IMR-90 (cell line): ENCODE measurements at regions of chr10 and their contacts with region 1.

Region 1: DNA sequence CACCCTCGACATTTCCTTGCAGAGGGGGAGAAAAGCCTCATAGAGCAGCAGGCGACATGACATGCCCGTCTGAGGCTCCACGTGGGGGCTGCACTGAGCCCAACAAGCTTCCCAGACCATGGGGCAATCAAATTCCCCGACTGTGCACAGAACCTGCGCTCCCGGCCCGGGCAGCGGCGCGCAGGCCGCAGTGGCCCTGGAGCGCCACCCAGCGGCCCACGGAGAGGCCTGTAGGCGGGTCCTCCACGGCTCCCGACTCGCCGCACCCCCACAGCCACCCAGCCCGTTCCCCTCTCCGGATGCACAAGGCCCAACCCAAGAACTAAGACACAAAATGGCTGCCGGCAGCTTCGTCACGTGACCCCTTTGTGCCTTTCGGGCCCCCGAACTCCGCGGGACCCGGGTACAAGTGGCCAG is 816 bp downstream of the EPC1 start:
- DNase-seq: peak; percentile 94
- ATAC-seq: peak; percentile 94
- H3K4me3 ChIP-seq: peak overlapping the region; percentile 90
- H3K27ac ChIP-seq: peak overlapping the region; percentile 99
- H3K4me1 ChIP-seq: no peaks in the 10 kb centered on the region; the same call in 1 of the 2 replicates
- H3K27me3 ChIP-seq: no peaks in the 10 kb centered on the region
- CTCF ChIP-seq: peak; percentile 99
- POLR2A ChIP-seq: no peak
- RAD21 ChIP-seq: peak; percentile 92

Region 2: GRCh38 chr10:31847515-31847914 is 498.6 kb before region 1 on chr10:
- CTCF ChIA-PET with region 1: no interaction called
- POLR2A ChIA-PET with region 1: no interaction called
- dilution Hi-C with region 1: no loop called
- in situ Hi-C with region 1: no loop called
- intact Hi-C with region 1: no loop called
- DNase-seq: no peak
- ATAC-seq: no peak
- H3K4me3 ChIP-seq: no peak overlapping the region
- H3K27ac ChIP-seq: no peak overlapping the region
- H3K4me1 ChIP-seq: no peaks in the 10 kb centered on the region
- H3K27me3 ChIP-seq: no peaks in the 10 kb centered on the region
- CTCF ChIP-seq: no peak
- POLR2A ChIP-seq: no peak
- RAD21 ChIP-seq: no peak

Region 3: DNA sequence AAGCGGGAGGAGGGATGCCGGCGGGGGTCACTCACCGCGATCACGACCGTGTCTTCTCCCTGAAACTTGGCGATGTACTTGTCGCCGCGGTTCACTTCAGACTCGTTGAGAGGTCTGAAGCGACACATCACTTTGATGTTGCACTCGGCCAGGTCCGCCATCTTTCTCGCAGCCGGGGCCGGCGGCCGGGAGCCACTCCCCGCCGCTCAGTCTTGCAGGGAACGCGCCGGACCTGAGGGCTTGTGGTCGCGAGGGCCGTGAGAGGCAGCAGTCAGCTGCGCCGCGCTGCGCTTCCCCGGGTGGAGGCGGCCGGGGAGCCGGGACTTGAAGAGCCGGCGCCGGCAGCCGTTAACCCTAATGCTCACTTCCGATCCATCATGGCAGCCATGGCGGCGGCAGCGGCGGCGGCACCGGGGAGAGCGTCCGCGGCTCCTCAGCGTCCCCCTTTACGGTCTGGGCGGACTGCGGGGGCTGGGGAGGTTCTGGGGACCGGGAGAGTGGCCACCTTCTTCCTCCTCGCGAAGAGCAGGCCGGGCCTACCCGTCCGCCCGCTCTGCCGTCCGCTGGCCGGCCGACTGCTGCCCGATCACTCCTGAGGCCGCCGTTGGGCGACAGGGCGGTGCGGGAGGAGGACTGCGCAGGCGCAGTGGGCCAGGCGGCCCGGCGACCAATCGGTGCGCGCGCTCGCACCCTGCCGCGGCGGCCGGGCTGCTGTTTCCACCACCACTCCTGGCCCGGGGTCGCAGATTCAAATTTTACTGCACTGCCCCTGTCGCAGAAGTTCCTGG is 290.1 kb before region 1 on chr10 and contains the start of gene KIF5B:
- CTCF ChIA-PET with region 1: no interaction called
- POLR2A ChIA-PET with region 1: no interaction called
- dilution Hi-C with region 1: no loop called
- in situ Hi-C with region 1: no loop called
- intact Hi-C with region 1: loop called (anchors 2 kb)
- DNase-seq: peak; percentile 81
- ATAC-seq: peak; percentile 90
- H3K4me3 ChIP-seq: peak within 1 kb of the TSS; percentile 93
- H3K27ac ChIP-seq: peak within 1 kb of the TSS; percentile 96
- H3K4me1 ChIP-seq: peaks cover 4% of the 10 kb centered on the region; the same call in 1 of the 2 replicates
- H3K27me3 ChIP-seq: no peaks in the 10 kb centered on the region
- CTCF ChIP-seq: no peak
- POLR2A ChIP-seq: peak; percentile 98
- RAD21 ChIP-seq: no peak
- total RNA-seq, gene KIF5B: 68.5 and 130 TPM in 2 replicates

Region 4: GRCh38 chr10:32190890-32191491 is 155.2 kb before region 1 on chr10:
- CTCF ChIA-PET with region 1: no interaction called
- POLR2A ChIA-PET with region 1: no interaction called
- dilution Hi-C with region 1: no loop called
- in situ Hi-C with region 1: no loop called
- intact Hi-C with region 1: loop called (anchors 1 kb)
- DNase-seq: peak; percentile 36
- ATAC-seq: peak; percentile 81
- H3K4me3 ChIP-seq: no peak overlapping the region
- H3K27ac ChIP-seq: no peak overlapping the region
- H3K4me1 ChIP-seq: no peaks in the 10 kb centered on the region
- H3K27me3 ChIP-seq: peaks cover 7% of the 10 kb centered on the region
- CTCF ChIP-seq: peak; percentile 77
- POLR2A ChIP-seq: no peak
- RAD21 ChIP-seq: peak; percentile 61

Region 5: GRCh38 chr10:32256613-32257437 is 89.3 kb before region 1 on chr10:
- CTCF ChIA-PET with region 1: interaction called, 8 read pairs
- POLR2A ChIA-PET with region 1: no interaction called
- dilution Hi-C with region 1: no loop called
- in situ Hi-C with region 1: no loop called
- intact Hi-C with region 1: loop called (anchors 1 kb)
- DNase-seq: peak; percentile 37
- ATAC-seq: peak; percentile 85
- H3K4me3 ChIP-seq: no peak overlapping the region
- H3K27ac ChIP-seq: no peak overlapping the region
- H3K4me1 ChIP-seq: no peaks in the 10 kb centered on the region
- H3K27me3 ChIP-seq: no peaks in the 10 kb centered on the region
- CTCF ChIP-seq: peak; percentile 85
- POLR2A ChIP-seq: no peak
- RAD21 ChIP-seq: peak; percentile 72

Region 6: GRCh38 chr10:32271617-32272016 is 74.5 kb before region 1 on chr10:
- CTCF ChIA-PET with region 1: interaction called, 3 read pairs
- POLR2A ChIA-PET with region 1: no interaction called
- dilution Hi-C with region 1: no loop called
- in situ Hi-C with region 1: no loop called
- intact Hi-C with region 1: loop called (anchors 5 kb)
- DNase-seq: peak; percentile 64
- ATAC-seq: no peak
- H3K4me3 ChIP-seq: no peak overlapping the region
- H3K27ac ChIP-seq: no peak overlapping the region
- H3K4me1 ChIP-seq: peaks cover 2% of the 10 kb centered on the region; the same call in 1 of the 2 replicates
- H3K27me3 ChIP-seq: no peaks in the 10 kb centered on the region
- CTCF ChIP-seq: no peak
- POLR2A ChIP-seq: no peak
- RAD21 ChIP-seq: no peak

Region 7: GRCh38 chr10:32409741-32410140 is 63.6 kb after region 1 on chr10:
- CTCF ChIA-PET with region 1: no interaction called
- POLR2A ChIA-PET with region 1: no interaction called
- dilution Hi-C with region 1: no loop called
- in situ Hi-C with region 1: no loop called
- intact Hi-C with region 1: no loop called
- DNase-seq: peak; percentile 7
- ATAC-seq: no peak
- H3K4me3 ChIP-seq: no peak overlapping the region
- H3K27ac ChIP-seq: no peak overlapping the region
- H3K4me1 ChIP-seq: peaks cover 3% of the 10 kb centered on the region; the same call in 1 of the 2 replicates
- H3K27me3 ChIP-seq: no peaks in the 10 kb centered on the region
- CTCF ChIP-seq: no peak
- POLR2A ChIP-seq: no peak
- RAD21 ChIP-seq: no peak